B cell (primary cell): ENCODE measurements at regions of chr19 and their contacts with region 1.

Region 1: GRCh38 chr19:28737021-28737895 is 475.7 kb downstream of the UQCRFS1 start:
- DNase-seq: peak; percentile 4
- ATAC-seq: no peak
- H3K4me3 ChIP-seq: no peak overlapping the region
- H3K4me3 Mint-ChIP-seq: no peak overlapping the region
- H3K27ac ChIP-seq: no peak overlapping the region
- H3K27ac Mint-ChIP-seq: no peak overlapping the region
- H3K4me1 ChIP-seq: no peaks in the 10 kb centered on the region
- H3K4me1 Mint-ChIP-seq: no peaks in the 10 kb centered on the region
- H3K27me3 ChIP-seq: no peaks in the 10 kb centered on the region
- H3K27me3 Mint-ChIP-seq: no peaks in the 10 kb centered on the region
- CTCF ChIP-seq: peak; percentile 10

Region 2: GRCh38 chr19:28393574-28394336 is 343.5 kb before region 1 on chr19:
- CTCF ChIA-PET with region 1: no interaction called
- POLR2A ChIA-PET with region 1: no interaction called
- intact Hi-C with region 1: no loop called
- DNase-seq: no peak
- ATAC-seq: no peak
- H3K4me3 ChIP-seq: peak overlapping the region in 1 of 5 experiments; percentile 16
- H3K4me3 Mint-ChIP-seq: peak overlapping the region; percentile 18
- H3K27ac ChIP-seq: no peak overlapping the region
- H3K27ac Mint-ChIP-seq: no peak overlapping the region
- H3K4me1 ChIP-seq: peaks cover 7 to 11% of the 10 kb centered on the region in 2 donors
- H3K4me1 Mint-ChIP-seq: peaks cover 15% of the 10 kb centered on the region
- H3K27me3 ChIP-seq: no peaks in the 10 kb centered on the region
- H3K27me3 Mint-ChIP-seq: no peaks in the 10 kb centered on the region
- CTCF ChIP-seq: no peak

Region 3: DNA sequence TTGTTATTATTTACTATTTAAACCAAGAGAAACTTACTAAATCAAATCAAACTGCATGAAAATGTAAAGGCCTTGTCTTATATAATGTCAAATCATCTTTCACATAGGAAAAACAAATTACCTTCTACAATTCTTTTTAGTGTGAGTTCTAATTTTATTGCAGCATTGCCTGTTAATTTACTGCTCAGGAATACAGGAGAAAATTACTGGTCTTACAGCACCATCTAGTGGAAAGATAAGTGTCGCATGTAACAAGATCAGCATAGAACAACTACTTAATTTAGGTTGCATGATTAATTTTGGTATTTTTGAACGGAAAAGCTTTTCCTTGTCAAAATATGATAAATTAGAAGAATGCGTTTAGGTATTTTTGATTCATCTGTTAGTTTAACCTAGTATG is 27.0 kb before region 1 on chr19:
- CTCF ChIA-PET with region 1: no interaction called
- POLR2A ChIA-PET with region 1: no interaction called
- intact Hi-C with region 1: no loop called
- DNase-seq: peak; percentile 52
- ATAC-seq: no peak
- H3K4me3 ChIP-seq: no peak overlapping the region
- H3K4me3 Mint-ChIP-seq: no peak overlapping the region
- H3K27ac ChIP-seq: no peak overlapping the region
- H3K27ac Mint-ChIP-seq: no peak overlapping the region
- H3K4me1 ChIP-seq: no peaks in the 10 kb centered on the region
- H3K4me1 Mint-ChIP-seq: no peaks in the 10 kb centered on the region
- H3K27me3 ChIP-seq: no peaks in the 10 kb centered on the region
- H3K27me3 Mint-ChIP-seq: no peaks in the 10 kb centered on the region
- CTCF ChIP-seq: peak; percentile 74

Region 4: GRCh38 chr19:28785971-28786370 is 48.7 kb after region 1 on chr19:
- CTCF ChIA-PET with region 1: no interaction called
- POLR2A ChIA-PET with region 1: no interaction called
- intact Hi-C with region 1: no loop called
- DNase-seq: no peak
- ATAC-seq: no peak
- H3K4me3 ChIP-seq: no peak overlapping the region
- H3K4me3 Mint-ChIP-seq: no peak overlapping the region
- H3K27ac ChIP-seq: no peak overlapping the region
- H3K27ac Mint-ChIP-seq: no peak overlapping the region
- H3K4me1 ChIP-seq: no peaks in the 10 kb centered on the region
- H3K4me1 Mint-ChIP-seq: no peaks in the 10 kb centered on the region
- H3K27me3 ChIP-seq: no peaks in the 10 kb centered on the region
- H3K27me3 Mint-ChIP-seq: no peaks in the 10 kb centered on the region
- CTCF ChIP-seq: no peak

Region 5: GRCh38 chr19:29263305-29264135 is 526.3 kb after region 1 on chr19:
- CTCF ChIA-PET with region 1: interaction called, 10 read pairs
- POLR2A ChIA-PET with region 1: no interaction called
- intact Hi-C with region 1: loop called (anchors 10 kb)
- DNase-seq: peak; percentile 46
- ATAC-seq: no peak
- H3K4me3 ChIP-seq: no peak overlapping the region
- H3K4me3 Mint-ChIP-seq: no peak overlapping the region
- H3K27ac ChIP-seq: no peak overlapping the region
- H3K27ac Mint-ChIP-seq: peak overlapping the region; percentile 60
- H3K4me1 ChIP-seq: no peaks in the 10 kb centered on the region
- H3K4me1 Mint-ChIP-seq: peaks cover 2% of the 10 kb centered on the region
- H3K27me3 ChIP-seq: peaks cover 0 to 4% (median 0%) of the 10 kb centered on the region in 4 experiments
- H3K27me3 Mint-ChIP-seq: peaks cover 18% of the 10 kb centered on the region
- CTCF ChIP-seq: peak; percentile 82